ENCODE measurements at regions of chr1 and their contacts with region 1.

Region 1: GRCh38 chr1:151327223-151327902 is at the start of gene PI4KB:
- DNase-seq: peak; percentile 98 to 99
- ATAC-seq: peak; percentile 96 to 98
- H3K4me3 ChIP-seq: peak within 1 kb of the TSS; percentile 84
- H3K27ac ChIP-seq: peak within 1 kb of the TSS; percentile 92 to 95
- H3K4me1 ChIP-seq: peaks cover 17% of the 10 kb centered on the region
- CTCF ChIP-seq: no peak
- EP300 ChIP-seq: no peak
- POLR2A ChIP-seq: peak; percentile 60
- RAD21 ChIP-seq: 0 out of 5 replicates have a peak, but pooled peaks of 1 of the 2 experiments have one; percentile 2
- polyA plus RNA-seq, gene PI4KB: 34.4 and 37.7 TPM in 2 replicates

Region 2: GRCh38 chr1:151311589-151312331 is 15.6 kb before region 1 on chr1:
- CTCF ChIA-PET with region 1: interaction called, 17 read pairs
- POLR2A ChIA-PET with region 1: interaction called, 13 read pairs
- DNase-seq: peak; percentile 93 to 99
- ATAC-seq: peak; percentile 99 to 100
- H3K4me3 ChIP-seq: no peak overlapping the region
- H3K27ac ChIP-seq: peak overlapping the region; percentile 64 to 81
- H3K4me1 ChIP-seq: peaks cover 44% of the 10 kb centered on the region
- CTCF ChIP-seq: no peak
- EP300 ChIP-seq: no peak; a peak in 1 of 5 replicates
- POLR2A ChIP-seq: no peak
- RAD21 ChIP-seq: no peak

Region 3: DNA sequence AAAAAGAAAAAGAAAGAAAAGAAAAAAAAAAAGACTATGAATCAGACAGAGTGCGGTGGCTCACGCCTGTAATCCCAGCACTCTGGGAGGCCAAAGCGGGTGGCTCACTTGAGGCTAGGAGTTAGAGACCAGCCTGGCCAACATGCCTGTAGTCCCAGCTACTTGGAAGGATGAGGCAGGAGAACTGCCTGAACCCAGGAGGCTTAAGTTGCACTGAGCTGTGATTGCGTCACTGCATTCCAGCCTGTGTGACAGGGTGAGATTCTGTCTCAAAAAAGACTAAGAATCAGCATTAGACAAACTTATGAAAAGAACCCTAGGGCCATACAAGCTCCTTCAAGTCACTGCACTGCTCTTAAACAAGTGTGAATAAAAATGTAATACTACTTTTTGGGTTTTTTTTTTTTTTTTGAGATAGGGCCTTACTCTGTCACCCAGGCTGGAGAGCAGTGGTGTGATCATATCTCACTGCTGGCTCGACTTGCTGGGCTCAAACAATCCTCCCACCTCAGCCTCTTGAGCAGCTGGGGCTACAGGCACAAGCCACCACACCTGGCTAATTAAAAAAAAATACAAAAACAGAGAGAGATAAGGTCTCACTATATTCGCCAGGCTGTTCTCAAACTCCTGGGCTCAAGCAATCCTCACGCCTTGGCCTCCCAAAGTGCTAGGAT is 89.0 kb after region 1 on chr1:
- CTCF ChIA-PET with region 1: no interaction called
- POLR2A ChIA-PET with region 1: no interaction called
- DNase-seq: no peak
- ATAC-seq: no peak; a peak in 2 of 6 replicates
- H3K4me3 ChIP-seq: no peak overlapping the region
- H3K27ac ChIP-seq: no peak overlapping the region
- H3K4me1 ChIP-seq: no peaks in the 10 kb centered on the region
- CTCF ChIP-seq: no peak
- EP300 ChIP-seq: no peak
- POLR2A ChIP-seq: no peak
- RAD21 ChIP-seq: no peak